ENCODE measurements at regions of chr14 and their contacts with region 1.

Region 1: GRCh38 chr14:49892636-49893308 is at the start of gene ARF6:
- DNase-seq: no peak
- ATAC-seq: peak; percentile 92
- H3K4me3 ChIP-seq: peak within 1 kb of the TSS; percentile 75 to 80
- H3K27ac ChIP-seq: peak within 1 kb of the TSS; percentile 97
- H3K4me1 ChIP-seq: no peaks in the 10 kb centered on the region; the same call in 1 of the 2 replicates
- H3K27me3 ChIP-seq: no peaks in the 10 kb centered on the region
- CTCF ChIP-seq: no peak; the same call in 1 of the 2 replicates
- total RNA-seq, gene ARF6: 63.2 TPM

Region 2: GRCh38 chr14:49687942-49688700 is 204.7 kb before region 1 on chr14 and contains the start of gene POLE2:
- CTCF ChIA-PET with region 1: no interaction called
- POLR2A ChIA-PET with region 1: no interaction called
- in situ Hi-C with region 1: no loop called
- intact Hi-C with region 1: no loop called
- DNase-seq: no peak
- ATAC-seq: peak; percentile 90
- H3K4me3 ChIP-seq: peak within 1 kb of the TSS; percentile 53 to 66
- H3K27ac ChIP-seq: peak within 1 kb of the TSS; percentile 89
- H3K4me1 ChIP-seq: peaks cover 14% of the 10 kb centered on the region
- H3K27me3 ChIP-seq: no peaks in the 10 kb centered on the region
- CTCF ChIP-seq: no peak
- total RNA-seq, gene POLE2: 17.4 TPM

Region 3: GRCh38 chr14:49879683-49880204 is 13.0 kb before region 1 on chr14:
- CTCF ChIA-PET with region 1: interaction called, 3 read pairs
- POLR2A ChIA-PET with region 1: interaction called, 16 read pairs
- in situ Hi-C with region 1: no loop called
- intact Hi-C with region 1: no loop called
- DNase-seq: no peak
- ATAC-seq: peak; percentile 91
- H3K4me3 ChIP-seq: peak overlapping the region in 1 of 2 experiments; percentile 18; a peak in 1 of 4 replicates
- H3K27ac ChIP-seq: peak overlapping the region; percentile 53
- H3K4me1 ChIP-seq: peaks cover 14% of the 10 kb centered on the region; the same call in 1 of the 2 replicates
- H3K27me3 ChIP-seq: no peaks in the 10 kb centered on the region
- CTCF ChIP-seq: peak; percentile 80

Region 4: DNA sequence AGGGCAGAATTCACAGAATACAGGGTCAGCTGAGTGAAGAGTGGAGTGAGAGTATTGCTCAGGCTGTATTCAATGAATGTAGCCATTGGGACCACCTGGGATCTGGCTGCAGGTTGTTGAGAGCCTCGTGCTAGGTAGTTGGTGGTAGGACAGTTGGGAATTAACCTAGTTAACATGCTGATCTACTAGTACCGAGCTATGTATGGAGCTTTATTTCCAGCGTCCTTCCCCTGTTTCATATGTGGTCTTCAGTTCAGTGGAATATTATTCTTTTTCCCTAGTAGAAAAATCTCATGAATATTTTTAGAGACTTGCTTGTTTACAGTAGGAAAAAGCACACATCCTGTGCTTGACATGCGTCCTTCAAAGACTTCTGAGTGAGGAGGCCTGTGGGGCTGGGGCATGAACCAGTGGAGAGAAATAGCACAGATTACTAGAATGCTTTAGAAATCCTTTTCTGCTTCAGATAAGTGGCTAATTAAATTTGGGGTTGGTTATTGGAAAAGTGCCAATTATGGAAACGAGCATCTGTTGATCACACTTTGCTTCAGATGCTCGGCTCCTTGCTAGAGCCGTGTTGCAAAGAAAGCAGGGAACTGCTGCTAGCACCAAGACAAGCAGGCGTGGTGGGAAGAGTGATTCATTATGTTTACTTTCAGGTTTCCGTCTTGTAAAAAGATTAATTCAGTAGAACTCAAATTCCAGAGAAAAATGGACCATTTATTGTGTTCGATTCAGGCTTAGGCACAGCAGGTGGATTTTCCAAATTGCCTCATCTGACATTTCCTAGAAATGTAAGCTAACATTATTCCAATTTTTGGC is 53.8 kb after region 1 on chr14:
- CTCF ChIA-PET with region 1: no interaction called
- POLR2A ChIA-PET with region 1: no interaction called
- in situ Hi-C with region 1: no loop called
- intact Hi-C with region 1: loop called (anchors 10 kb)
- DNase-seq: peak; percentile 52
- ATAC-seq: peak; percentile 86
- H3K4me3 ChIP-seq: no peak overlapping the region; a peak in 1 of 4 replicates
- H3K27ac ChIP-seq: peak overlapping the region; percentile 98
- H3K4me1 ChIP-seq: peaks cover 49% of the 10 kb centered on the region
- H3K27me3 ChIP-seq: no peaks in the 10 kb centered on the region
- CTCF ChIP-seq: no peak

Region 5: DNA sequence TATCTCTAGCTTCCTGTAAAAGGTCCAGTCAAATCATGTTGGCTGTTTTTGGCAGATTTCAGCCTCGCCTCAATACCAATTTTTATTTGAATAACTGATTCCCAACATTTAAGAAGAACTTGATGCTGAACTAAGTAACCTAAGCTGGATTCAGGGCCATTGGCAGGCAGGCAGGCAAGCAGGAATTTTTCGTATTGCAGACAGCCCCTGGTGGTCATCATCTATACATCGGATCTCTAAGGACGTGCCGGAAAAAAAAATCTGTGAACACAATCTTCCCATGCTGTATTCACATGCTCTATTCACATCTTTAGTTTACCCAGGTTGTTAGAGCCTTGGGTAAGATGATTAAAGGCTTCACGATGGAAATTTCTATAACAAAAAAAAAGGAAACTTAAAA is 216.6 kb after region 1 on chr14:
- CTCF ChIA-PET with region 1: no interaction called
- POLR2A ChIA-PET with region 1: no interaction called
- in situ Hi-C with region 1: no loop called
- intact Hi-C with region 1: loop called (anchors 5 kb)
- DNase-seq: no peak
- ATAC-seq: no peak
- H3K4me3 ChIP-seq: no peak overlapping the region
- H3K27ac ChIP-seq: no peak overlapping the region
- H3K4me1 ChIP-seq: no peaks in the 10 kb centered on the region; the same call in 1 of the 2 replicates
- H3K27me3 ChIP-seq: no peaks in the 10 kb centered on the region
- CTCF ChIP-seq: peak; percentile 37; the same call in 1 of the 2 replicates

Measured in Panc1 (cell line).